GM12878 (cell line): ENCODE measurements at regions of chr3 and their contacts with region 1.

Region 1: DNA sequence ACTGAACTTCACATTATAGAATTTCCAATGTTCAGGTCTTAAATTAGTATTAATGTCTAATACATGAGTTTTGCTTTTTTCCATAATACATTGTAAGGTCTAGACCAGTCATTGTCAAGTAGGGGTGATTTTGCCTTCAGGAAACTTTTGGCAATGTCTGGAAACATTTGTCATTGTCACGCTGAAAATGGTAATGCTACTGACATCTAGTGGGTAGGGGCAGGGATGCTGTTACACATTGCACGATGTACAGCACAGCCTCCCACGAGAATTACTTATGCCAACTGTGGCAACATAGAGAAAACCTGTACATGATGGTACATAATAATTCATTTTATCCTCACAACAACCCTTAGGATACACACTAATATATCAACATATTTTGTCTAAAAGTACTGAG is 384.1 kb downstream of the CADM2 start:
- DNase-seq: no peak
- ATAC-seq: peak; percentile 81
- H3K4me3 ChIP-seq: no peak overlapping the region
- H3K27ac ChIP-seq: no peak overlapping the region
- H3K4me1 ChIP-seq: no peaks in the 10 kb centered on the region
- H3K27me3 ChIP-seq: no peaks in the 10 kb centered on the region
- CTCF ChIP-seq: peak; percentile 43 to 49 (median 43); a peak in 3 of 6 replicates
- EP300 ChIP-seq: no peak
- POLR2A ChIP-seq: no peak
- RAD21 ChIP-seq: peak; percentile 37; the same call in 1 of the 2 replicates

Region 2: DNA sequence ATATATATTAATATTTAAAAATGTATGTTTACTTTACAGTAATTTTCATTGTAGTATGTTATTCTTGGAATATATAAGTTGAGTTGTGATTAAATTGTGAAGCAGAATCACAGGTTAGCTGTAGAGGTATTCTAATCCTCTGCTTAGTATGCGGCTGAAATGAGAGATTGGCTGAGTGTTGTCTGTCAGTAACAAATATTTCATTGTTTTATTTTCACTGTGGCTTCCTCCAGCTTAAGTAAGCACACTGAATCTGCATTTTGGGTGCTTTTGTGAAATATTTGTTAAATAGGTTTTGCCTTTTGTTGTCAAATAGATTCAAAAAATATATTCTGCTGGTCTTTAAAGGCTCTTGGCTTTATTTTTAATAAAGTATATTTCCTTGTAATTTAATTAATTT is 26.7 kb before region 1 on chr3:
- CTCF ChIA-PET with region 1: no interaction called
- POLR2A ChIA-PET with region 1: interaction called, 11 read pairs
- RAD21 ChIA-PET with region 1: no interaction called
- SMC1A ChIA-PET with region 1: no interaction called
- in situ Hi-C with region 1: no loop called
- intact Hi-C with region 1: no loop called
- DNase-seq: no peak
- ATAC-seq: no peak
- H3K4me3 ChIP-seq: no peak overlapping the region
- H3K27ac ChIP-seq: no peak overlapping the region
- H3K4me1 ChIP-seq: no peaks in the 10 kb centered on the region
- H3K27me3 ChIP-seq: no peaks in the 10 kb centered on the region
- CTCF ChIP-seq: no peak
- EP300 ChIP-seq: no peak
- POLR2A ChIP-seq: no peak
- RAD21 ChIP-seq: no peak